CD4-positive, alpha-beta memory T cell (primary cell): ENCODE measurements at regions of chr9 and their contacts with region 1.

Region 1: GRCh38 chr9:5425006-5425628 is 12.6 kb downstream of the PLGRKT start:
- DNase-seq: peak in 4 of 5 donors; percentile 48 to 53 (median 50)
- H3K4me3 ChIP-seq: no peak overlapping the region
- H3K4me3 Mint-ChIP-seq: no peak overlapping the region
- H3K27ac ChIP-seq: no peak overlapping the region
- H3K27ac Mint-ChIP-seq: peak overlapping the region in 1 of 7 donors; percentile 56
- H3K4me1 ChIP-seq: no peaks in the 10 kb centered on the region
- H3K4me1 Mint-ChIP-seq: peaks cover 3 to 12% (median 6%) of the 10 kb centered on the region in 4 donors
- H3K27me3 ChIP-seq: no peaks in the 10 kb centered on the region
- H3K27me3 Mint-ChIP-seq: no peaks in the 10 kb centered on the region

Region 2: DNA sequence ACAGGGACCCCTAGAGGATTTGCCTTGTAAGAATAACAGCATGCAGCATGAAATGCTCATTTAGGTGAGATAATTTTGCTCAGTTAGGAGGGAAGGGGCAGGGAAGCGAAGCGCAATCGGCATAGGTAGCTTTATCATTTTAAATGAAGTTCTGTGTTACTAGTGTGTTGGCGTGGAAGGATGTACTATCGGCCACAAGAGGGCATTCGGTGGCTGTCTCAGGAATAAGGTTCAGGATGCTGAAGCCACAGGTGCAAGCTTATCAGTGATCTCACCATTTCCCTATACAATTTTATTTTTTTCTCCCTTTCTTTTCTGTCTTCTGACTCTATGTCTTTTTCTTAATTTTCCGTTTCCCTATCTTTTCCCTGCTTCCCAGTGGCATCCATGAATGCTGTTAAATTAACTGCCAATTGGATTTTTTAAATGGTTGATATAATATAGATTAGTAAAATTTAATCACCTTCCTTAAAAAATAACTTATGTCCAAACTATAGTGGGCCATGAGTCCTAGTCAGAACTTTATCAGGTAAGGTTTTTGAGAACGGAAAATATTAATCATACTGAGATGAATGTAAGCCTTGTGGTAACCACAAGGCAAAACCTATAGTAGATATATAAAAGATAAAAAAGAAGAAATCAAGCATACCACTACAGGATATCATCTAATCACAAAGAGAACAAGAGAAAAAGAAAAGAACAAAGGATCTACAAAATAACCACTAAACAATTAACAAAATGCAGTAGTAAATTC is 238.5 kb before region 1 on chr9:
- CTCF ChIA-PET with region 1: interaction called, 186 read pairs
- POLR2A ChIA-PET with region 1: interaction called, 6 read pairs
- intact Hi-C with region 1: loop called (anchors 1 kb)
- DNase-seq: peak; percentile 67 to 72 (median 71)
- H3K4me3 ChIP-seq: no peak overlapping the region
- H3K4me3 Mint-ChIP-seq: peak overlapping the region in 2 of 8 donors; percentile 3 to 48
- H3K27ac ChIP-seq: no peak overlapping the region
- H3K27ac Mint-ChIP-seq: peak overlapping the region in 5 of 7 donors; percentile 8 to 54 (median 10)
- H3K4me1 ChIP-seq: peaks cover 10% of the 10 kb centered on the region
- H3K4me1 Mint-ChIP-seq: peaks cover 4 to 13% (median 11%) of the 10 kb centered on the region in 4 donors
- H3K27me3 ChIP-seq: no peaks in the 10 kb centered on the region
- H3K27me3 Mint-ChIP-seq: no peaks in the 10 kb centered on the region

Region 3: GRCh38 chr9:5263351-5264218 is 161.5 kb before region 1 on chr9:
- CTCF ChIA-PET with region 1: interaction called, 3 read pairs
- POLR2A ChIA-PET with region 1: no interaction called
- intact Hi-C with region 1: loop called (anchors 1 kb)
- DNase-seq: peak in 2 of 5 donors; percentile 7
- H3K4me3 ChIP-seq: no peak overlapping the region
- H3K4me3 Mint-ChIP-seq: peak overlapping the region in 3 of 8 donors; percentile 10 to 35 (median 17)
- H3K27ac ChIP-seq: no peak overlapping the region
- H3K27ac Mint-ChIP-seq: peak overlapping the region in 2 of 7 donors; percentile 8 to 10
- H3K4me1 ChIP-seq: no peaks in the 10 kb centered on the region
- H3K4me1 Mint-ChIP-seq: peaks cover 7 to 18% (median 14%) of the 10 kb centered on the region in 4 donors
- H3K27me3 ChIP-seq: no peaks in the 10 kb centered on the region
- H3K27me3 Mint-ChIP-seq: no peaks in the 10 kb centered on the region

Region 4: DNA sequence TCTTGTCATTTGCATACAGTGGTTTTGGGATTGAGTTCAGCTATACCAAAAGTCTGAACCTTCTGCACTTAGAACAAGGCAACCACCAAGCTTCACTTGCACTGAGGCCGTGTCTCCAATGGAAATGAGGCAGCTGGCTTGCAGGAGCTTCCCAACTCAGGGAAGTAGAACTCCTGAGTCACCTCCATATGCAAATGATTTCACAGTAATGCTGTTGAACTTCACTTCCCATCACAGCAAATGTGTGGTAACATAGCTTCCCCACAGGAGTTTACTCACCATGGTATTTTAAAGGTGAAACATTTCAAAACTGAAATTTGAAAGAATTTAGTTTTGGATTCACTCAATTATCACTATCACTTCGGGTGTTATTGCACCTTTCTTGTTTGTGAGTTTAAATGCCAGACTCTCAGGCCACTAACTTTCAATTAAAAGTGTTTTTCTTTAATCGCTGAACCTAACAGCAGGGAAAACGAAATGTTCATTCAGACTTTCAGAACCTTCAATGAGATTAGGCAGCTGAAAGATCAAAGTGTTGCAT is 34.2 kb after region 1 on chr9:
- CTCF ChIA-PET with region 1: no interaction called
- POLR2A ChIA-PET with region 1: no interaction called
- intact Hi-C with region 1: no loop called
- DNase-seq: no peak
- H3K4me3 ChIP-seq: no peak overlapping the region
- H3K4me3 Mint-ChIP-seq: peak overlapping the region in 2 of 8 donors; percentile 35 to 48
- H3K27ac ChIP-seq: no peak overlapping the region
- H3K27ac Mint-ChIP-seq: peak overlapping the region in 5 of 7 donors; percentile 2 to 82 (median 72)
- H3K4me1 ChIP-seq: peaks cover 20% of the 10 kb centered on the region
- H3K4me1 Mint-ChIP-seq: peaks cover 28 to 37% (median 32%) of the 10 kb centered on the region in 4 donors
- H3K27me3 ChIP-seq: no peaks in the 10 kb centered on the region
- H3K27me3 Mint-ChIP-seq: no peaks in the 10 kb centered on the region

Region 5: DNA sequence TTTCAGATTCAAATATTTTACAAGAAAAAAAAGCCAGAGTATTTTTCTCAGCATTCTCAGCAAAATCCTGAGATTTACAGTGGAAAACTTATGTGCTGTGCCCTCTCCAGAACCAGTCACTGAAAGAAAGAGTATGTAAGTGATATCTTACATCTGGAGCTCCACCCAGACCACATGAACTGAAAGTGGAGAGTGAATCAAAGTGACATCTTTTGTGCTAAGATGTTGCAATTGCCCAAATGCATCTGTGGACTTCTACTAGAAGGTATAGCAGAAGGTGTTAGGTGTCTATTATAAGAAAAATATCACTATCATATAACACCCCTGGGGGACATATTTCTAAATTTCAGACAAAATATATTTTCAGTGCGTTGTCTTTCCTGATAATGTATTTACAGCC is 154.8 kb after region 1 on chr9:
- CTCF ChIA-PET with region 1: no interaction called
- POLR2A ChIA-PET with region 1: no interaction called
- intact Hi-C with region 1: no loop called
- DNase-seq: no peak
- H3K4me3 ChIP-seq: no peak overlapping the region
- H3K4me3 Mint-ChIP-seq: no peak overlapping the region
- H3K27ac ChIP-seq: no peak overlapping the region
- H3K27ac Mint-ChIP-seq: peak overlapping the region in 1 of 7 donors; percentile 19
- H3K4me1 ChIP-seq: peaks cover 8% of the 10 kb centered on the region
- H3K4me1 Mint-ChIP-seq: peaks cover 18 to 42% (median 22%) of the 10 kb centered on the region in 4 donors
- H3K27me3 ChIP-seq: no peaks in the 10 kb centered on the region
- H3K27me3 Mint-ChIP-seq: no peaks in the 10 kb centered on the region

Region 6: DNA sequence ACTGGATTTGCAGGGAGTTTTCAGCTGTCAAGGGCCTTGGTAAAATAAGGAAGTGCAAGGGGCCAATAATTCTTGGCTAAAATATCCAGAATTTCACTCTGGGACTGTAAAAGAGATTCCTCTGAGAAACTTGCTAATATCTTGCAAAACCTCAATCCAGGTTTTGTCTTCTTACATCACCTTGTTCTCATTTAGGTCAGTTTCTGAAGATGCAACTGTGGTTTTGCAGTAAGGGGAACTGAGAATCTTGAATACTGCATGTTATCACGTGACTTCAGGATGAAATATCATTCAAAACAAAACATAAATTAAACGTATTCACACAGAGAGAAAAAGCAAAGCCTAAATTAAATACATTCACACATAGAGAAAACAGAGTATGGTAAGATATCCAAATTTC is 168.8 kb after region 1 on chr9:
- CTCF ChIA-PET with region 1: interaction called, 40 read pairs
- POLR2A ChIA-PET with region 1: no interaction called
- intact Hi-C with region 1: loop called (anchors 1 kb)
- DNase-seq: no peak
- H3K4me3 ChIP-seq: no peak overlapping the region
- H3K4me3 Mint-ChIP-seq: no peak overlapping the region
- H3K27ac ChIP-seq: no peak overlapping the region
- H3K27ac Mint-ChIP-seq: peak overlapping the region in 2 of 7 donors; percentile 3 to 15
- H3K4me1 ChIP-seq: peaks cover 5% of the 10 kb centered on the region
- H3K4me1 Mint-ChIP-seq: peaks cover 7 to 13% (median 8%) of the 10 kb centered on the region in 4 donors
- H3K27me3 ChIP-seq: no peaks in the 10 kb centered on the region
- H3K27me3 Mint-ChIP-seq: no peaks in the 10 kb centered on the region

Region 7: DNA sequence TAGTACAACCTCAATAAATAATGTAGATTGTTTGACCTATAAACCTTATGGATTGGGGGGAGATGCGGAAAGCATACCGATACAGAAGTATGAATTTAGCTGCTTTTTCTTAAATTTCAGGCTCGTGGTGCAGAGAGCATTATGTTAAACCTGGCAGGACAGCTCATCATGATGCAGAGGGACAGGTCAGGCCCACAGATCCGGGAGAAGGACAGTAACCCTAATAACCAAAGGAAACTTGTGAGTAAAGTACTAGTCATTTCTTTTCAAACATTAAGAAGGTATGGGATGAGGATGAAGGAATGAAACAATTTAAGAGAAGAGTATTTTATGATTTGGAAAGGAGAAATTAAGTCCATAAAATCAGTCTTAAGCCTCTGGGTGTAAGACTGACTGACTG is 337.3 kb after region 1 on chr9:
- CTCF ChIA-PET with region 1: no interaction called
- POLR2A ChIA-PET with region 1: no interaction called
- intact Hi-C with region 1: no loop called
- DNase-seq: no peak
- H3K4me3 ChIP-seq: no peak overlapping the region
- H3K4me3 Mint-ChIP-seq: no peak overlapping the region
- H3K27ac ChIP-seq: no peak overlapping the region
- H3K27ac Mint-ChIP-seq: peak overlapping the region in 3 of 7 donors; percentile 14 to 80 (median 21)
- H3K4me1 ChIP-seq: no peaks in the 10 kb centered on the region
- H3K4me1 Mint-ChIP-seq: peaks cover 0 to 5% (median 2%) of the 10 kb centered on the region in 4 donors
- H3K27me3 ChIP-seq: no peaks in the 10 kb centered on the region
- H3K27me3 Mint-ChIP-seq: no peaks in the 10 kb centered on the region